A673 (cell line): ENCODE measurements at regions of chr1 and their contacts with region 1.

Region 1: DNA sequence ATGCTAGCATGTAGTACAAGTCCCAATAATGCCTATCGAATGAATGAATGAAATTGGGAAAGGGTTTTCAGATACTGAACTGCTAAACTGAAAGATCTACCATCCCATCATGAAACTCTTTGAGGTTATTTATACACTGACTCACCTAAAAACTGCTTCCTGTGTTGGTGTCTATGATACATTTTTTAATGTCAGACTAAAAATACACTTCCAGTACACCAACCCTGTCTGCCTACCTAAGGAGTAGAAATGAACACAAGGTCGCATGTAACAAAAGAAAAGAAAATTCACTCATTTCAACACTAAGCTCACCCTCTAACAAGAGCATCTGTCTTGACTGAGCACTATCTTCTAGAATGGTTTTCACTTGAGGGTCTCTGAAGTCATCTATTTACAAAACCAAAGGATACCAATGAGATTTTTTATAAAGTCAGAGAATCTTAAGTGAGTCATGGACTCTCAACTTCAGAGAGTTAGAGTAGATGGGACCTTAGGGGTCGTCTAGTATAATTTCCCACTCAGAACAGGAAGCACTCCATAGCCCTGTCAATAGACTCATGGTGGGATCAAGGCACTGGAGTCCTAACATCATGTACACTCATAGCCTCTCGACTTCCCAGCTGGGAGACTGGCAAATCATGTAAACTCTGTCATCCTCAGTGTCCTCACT is 53.4 kb downstream of the WLS start:
- DNase-seq: no peak
- H3K4me3 ChIP-seq: no peak overlapping the region
- H3K27ac ChIP-seq: no peak overlapping the region
- H3K4me1 ChIP-seq: peaks cover 14% of the 10 kb centered on the region
- H3K27me3 ChIP-seq: no peaks in the 10 kb centered on the region
- CTCF ChIP-seq: no peak

Region 2: DNA sequence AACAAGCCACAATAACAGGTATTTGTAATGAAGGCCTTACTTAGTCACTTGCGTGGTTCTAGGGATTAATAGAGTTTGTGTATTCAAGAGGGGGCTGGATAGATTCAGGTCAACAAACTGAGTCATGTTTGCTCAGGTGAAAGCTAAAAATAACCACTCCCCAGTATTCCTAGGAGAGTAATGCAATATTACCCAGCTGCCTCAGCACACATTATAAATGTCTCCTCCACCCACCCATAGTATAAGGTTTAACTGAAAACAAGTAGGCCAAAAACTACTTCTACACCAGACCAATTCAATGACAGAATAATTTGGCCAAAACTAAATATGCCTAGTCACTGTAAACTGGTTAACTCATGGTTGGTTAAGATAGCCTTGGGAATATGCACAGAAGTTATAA is 18.9 kb after region 1 on chr1:
- CTCF ChIA-PET with region 1: no interaction called
- POLR2A ChIA-PET with region 1: no interaction called
- intact Hi-C with region 1: loop called (anchors 2 kb)
- DNase-seq: no peak
- H3K4me3 ChIP-seq: no peak overlapping the region
- H3K27ac ChIP-seq: peak overlapping the region; percentile 32
- H3K4me1 ChIP-seq: peaks cover 41% of the 10 kb centered on the region
- H3K27me3 ChIP-seq: no peaks in the 10 kb centered on the region
- CTCF ChIP-seq: no peak

Region 3: DNA sequence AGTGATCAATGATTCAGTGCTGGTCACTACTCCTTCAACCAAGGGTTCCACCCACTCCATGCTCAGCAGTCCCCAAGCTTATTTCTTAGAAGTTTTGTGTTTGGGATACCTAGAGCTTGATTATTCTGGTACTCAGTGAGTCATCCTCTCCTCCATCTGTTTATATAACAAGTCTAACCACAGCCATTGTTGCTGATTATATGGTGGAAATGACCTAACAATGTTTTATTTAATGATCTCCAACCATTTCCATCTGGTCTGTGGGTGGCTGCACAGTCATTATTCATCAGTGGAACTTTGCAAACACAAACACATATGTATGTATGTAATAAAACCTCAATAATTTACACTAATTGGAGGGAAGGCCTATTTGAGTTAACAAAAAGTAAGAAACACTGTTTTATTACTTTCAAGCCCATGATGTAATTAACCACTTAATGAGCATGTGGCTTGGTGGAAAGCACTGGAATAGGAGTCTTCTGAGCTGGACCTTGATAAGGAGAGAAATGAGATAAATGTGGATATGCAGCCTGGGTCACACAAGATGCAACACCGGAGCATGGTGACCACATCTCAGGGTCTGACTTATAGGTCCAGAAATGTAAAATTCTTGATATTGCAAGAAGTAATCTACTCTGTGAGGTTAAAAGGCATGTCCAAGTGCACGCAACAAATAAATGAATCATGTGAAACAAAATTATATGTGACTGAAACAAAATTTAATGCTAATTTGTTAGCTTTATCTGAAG is 152.3 kb after region 1 on chr1:
- CTCF ChIA-PET with region 1: no interaction called
- POLR2A ChIA-PET with region 1: no interaction called
- intact Hi-C with region 1: no loop called
- DNase-seq: peak; percentile 81
- H3K4me3 ChIP-seq: no peak overlapping the region
- H3K27ac ChIP-seq: no peak overlapping the region
- H3K4me1 ChIP-seq: no peaks in the 10 kb centered on the region
- H3K27me3 ChIP-seq: no peaks in the 10 kb centered on the region
- CTCF ChIP-seq: no peak